Lower leg skin (tissue), 4 donors: ENCODE measurements at regions of chr2 and their contacts with region 1.

Region 1: DNA sequence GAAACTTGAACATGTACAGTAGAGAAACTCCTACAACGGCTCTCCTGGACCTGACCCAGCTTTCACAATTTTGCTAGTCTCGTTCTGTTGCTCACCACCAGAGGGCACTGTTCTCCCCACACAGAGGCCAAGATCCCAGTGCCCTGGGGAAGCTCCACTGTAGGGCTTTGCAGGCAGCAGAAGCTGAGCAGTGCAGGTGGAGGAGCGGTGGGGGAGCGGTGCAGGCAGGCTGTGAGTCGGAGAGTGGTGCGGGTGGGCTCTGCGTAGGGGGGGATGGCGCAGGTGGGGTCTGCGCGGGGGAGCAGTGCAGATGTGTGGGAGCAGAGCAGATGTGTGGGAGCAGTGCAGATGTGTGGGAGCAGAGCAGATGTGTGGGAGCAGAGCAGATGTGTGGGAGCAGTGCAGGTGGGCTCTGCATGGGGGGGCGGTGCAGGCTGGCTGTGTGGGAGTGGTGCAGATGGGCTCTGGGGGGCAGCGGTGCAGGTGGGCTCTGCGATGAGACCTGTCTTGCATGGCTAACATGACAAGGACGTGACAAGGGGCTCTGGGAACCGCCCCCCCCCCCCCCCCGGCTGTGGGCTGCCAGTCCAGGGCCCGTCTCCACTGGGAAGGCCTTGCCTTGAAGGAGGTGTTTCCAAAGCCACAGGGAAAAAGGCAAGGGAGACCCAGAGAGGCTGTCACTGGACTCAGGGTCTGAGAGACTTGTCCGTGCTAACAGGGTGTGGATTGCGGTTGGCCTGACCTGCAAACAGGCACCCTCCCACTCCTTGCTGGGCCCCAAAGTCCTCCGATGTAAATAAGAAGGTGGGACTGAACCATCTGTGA is 7.3 kb downstream of the CYS1 start:
- DNase-seq: peak; percentile 77 to 94
- H3K4me3 ChIP-seq: no peak overlapping the region
- CTCF ChIP-seq: no peak
- POLR2A ChIP-seq: no peak

Region 2: DNA sequence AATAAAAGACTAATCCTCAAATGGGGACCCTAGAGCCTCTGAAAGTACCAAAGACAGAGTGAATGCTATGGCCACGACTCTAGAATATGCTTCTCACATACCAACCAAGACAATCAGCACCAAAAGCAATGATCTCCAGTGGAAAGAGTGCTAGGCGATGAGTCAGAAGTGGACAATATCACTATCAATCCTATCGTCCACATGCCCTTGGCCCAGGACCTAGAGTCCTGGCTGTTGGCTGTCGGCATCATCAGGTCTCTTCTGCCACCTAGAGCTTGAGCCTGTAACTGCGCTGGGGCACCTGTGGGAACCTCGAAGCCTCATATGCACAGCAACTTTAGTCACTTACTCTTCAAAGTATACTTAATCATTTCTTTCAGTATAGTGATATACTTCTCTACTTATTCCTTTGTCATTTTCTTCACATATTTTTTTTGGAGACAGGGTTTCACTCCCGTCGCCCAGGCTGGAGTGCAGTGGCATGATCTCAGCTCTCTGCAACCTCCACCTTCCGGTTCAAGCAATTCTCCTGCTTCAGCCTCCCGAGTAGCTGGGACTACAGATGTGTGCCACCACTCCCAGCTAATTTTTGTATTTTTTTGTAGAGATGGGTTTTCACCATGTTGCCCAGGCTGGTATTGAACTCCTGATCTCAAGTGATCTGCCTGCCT is 587.2 kb after region 1 on chr2:
- intact Hi-C with region 1: loop called (anchors 10 kb)
- DNase-seq: no peak
- H3K4me3 ChIP-seq: no peak overlapping the region
- CTCF ChIP-seq: no peak
- POLR2A ChIP-seq: no peak